ENCODE measurements at regions of chr7 and their contacts with region 1.

Region 1: GRCh38 chr7:87416682-87417587 is 58.5 kb downstream of the ABCB4 start:
- DNase-seq: peak; percentile 67
- H3K4me3 Mint-ChIP-seq: no peak overlapping the region
- H3K27ac Mint-ChIP-seq: no peak overlapping the region
- H3K4me1 Mint-ChIP-seq: no peaks in the 10 kb centered on the region
- H3K27me3 Mint-ChIP-seq: no peaks in the 10 kb centered on the region
- CTCF ChIP-seq: no peak

Region 2: GRCh38 chr7:85529197-85529596 is 1887.7 kb before region 1 on chr7:
- CTCF ChIA-PET with region 1: no interaction called
- intact Hi-C with region 1: no loop called
- DNase-seq: no peak
- H3K4me3 Mint-ChIP-seq: no peak overlapping the region
- H3K27ac Mint-ChIP-seq: no peak overlapping the region
- H3K4me1 Mint-ChIP-seq: peaks cover 12% of the 10 kb centered on the region
- H3K27me3 Mint-ChIP-seq: no peaks in the 10 kb centered on the region
- CTCF ChIP-seq: no peak

Region 3: GRCh38 chr7:86939197-86939814 is 477.6 kb before region 1 on chr7:
- CTCF ChIA-PET with region 1: no interaction called
- intact Hi-C with region 1: loop called (anchors 10 kb)
- DNase-seq: peak; percentile 55
- H3K4me3 Mint-ChIP-seq: no peak overlapping the region
- H3K27ac Mint-ChIP-seq: no peak overlapping the region
- H3K4me1 Mint-ChIP-seq: no peaks in the 10 kb centered on the region
- H3K27me3 Mint-ChIP-seq: peaks cover 12% of the 10 kb centered on the region
- CTCF ChIP-seq: no peak

Region 4: DNA sequence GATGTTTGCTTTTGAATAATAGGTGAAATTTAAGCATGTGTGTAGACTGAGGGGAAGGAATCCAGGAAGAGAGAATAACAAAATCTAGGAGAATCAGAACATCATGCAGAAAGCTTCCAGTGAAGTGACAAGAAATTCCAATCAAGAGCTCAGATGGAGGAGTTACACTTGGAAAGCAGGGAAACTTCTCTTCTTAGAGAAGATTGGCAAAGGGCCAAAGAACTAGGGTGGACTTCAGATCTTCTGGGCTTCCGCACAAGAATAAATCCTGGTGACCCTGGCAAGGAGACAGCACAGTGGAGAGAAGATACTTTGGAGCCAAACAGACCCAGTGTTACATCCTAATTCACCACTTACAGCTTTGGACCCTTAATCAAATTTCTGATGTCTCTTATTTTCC is 164.8 kb before region 1 on chr7:
- CTCF ChIA-PET with region 1: no interaction called
- intact Hi-C with region 1: no loop called
- DNase-seq: no peak
- H3K4me3 Mint-ChIP-seq: no peak overlapping the region
- H3K27ac Mint-ChIP-seq: no peak overlapping the region
- H3K4me1 Mint-ChIP-seq: no peaks in the 10 kb centered on the region
- H3K27me3 Mint-ChIP-seq: peaks cover 44% of the 10 kb centered on the region
- CTCF ChIP-seq: no peak

Region 5: DNA sequence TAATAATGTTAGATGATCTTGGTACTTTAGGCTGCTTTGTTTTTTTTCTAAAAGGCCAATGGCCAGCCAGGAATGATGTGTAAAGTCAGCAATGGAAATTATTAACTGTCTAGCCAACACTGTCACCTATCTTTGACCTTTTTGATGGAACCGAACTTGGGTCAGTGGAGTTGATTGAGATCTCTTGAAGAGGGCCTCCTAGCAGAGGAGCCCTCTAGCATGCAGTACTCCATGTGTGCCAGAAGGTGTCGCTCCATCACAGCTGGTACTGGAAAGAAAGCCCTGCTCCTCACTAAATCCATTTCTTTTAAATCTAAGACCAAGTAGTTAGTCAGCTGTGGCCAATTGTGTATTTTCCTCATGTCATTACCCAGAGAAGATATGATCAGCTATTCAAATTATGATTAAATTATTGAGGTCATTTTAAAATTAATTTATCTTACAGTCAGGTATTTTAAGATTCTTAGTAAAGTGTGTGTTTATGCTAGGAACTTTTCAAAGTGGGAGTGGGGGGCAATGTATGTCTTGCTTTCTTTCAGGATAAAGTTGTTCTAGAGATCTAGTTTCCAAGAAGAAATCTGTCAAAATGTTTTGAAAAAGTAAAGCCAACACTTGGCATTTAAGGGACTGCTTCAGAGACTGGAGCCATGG is 104.6 kb before region 1 on chr7:
- CTCF ChIA-PET with region 1: interaction called, 4 read pairs
- intact Hi-C with region 1: loop called (anchors 1 kb)
- DNase-seq: peak; percentile 54
- H3K4me3 Mint-ChIP-seq: no peak overlapping the region
- H3K27ac Mint-ChIP-seq: no peak overlapping the region
- H3K4me1 Mint-ChIP-seq: peaks cover 6% of the 10 kb centered on the region
- H3K27me3 Mint-ChIP-seq: peaks cover 7% of the 10 kb centered on the region
- CTCF ChIP-seq: peak; percentile 38